ENCODE measurements at regions of chr5 and their contacts with region 1.

Region 1: GRCh38 chr5:87267574-87268125 is at the start of gene RASA1:
- DNase-seq: peak; percentile 88 to 97 (median 94)
- H3K4me3 ChIP-seq: peak within 1 kb of the TSS; percentile 64 to 99 (median 94)
- H3K27ac ChIP-seq: peak within 1 kb of the TSS; percentile 57 to 99 (median 93)
- H3K27me3 ChIP-seq: no peaks in the 10 kb centered on the region
- CTCF ChIP-seq: peak in 27 of 56 donors; percentile 5 to 48 (median 28)
- total RNA-seq, gene RASA1: 31.7 to 73.6 (median 55.8) TPM

Region 2: GRCh38 chr5:86623785-86624483 is 643.7 kb before region 1 on chr5:
- intact Hi-C with region 1: loop called in 1 of 2 experiments (anchors 10 kb)
- DNase-seq: no peak
- H3K4me3 ChIP-seq: no peak overlapping the region
- H3K27ac ChIP-seq: no peak overlapping the region
- H3K27me3 ChIP-seq: no peaks in the 10 kb centered on the region
- CTCF ChIP-seq: no peak

Region 3: DNA sequence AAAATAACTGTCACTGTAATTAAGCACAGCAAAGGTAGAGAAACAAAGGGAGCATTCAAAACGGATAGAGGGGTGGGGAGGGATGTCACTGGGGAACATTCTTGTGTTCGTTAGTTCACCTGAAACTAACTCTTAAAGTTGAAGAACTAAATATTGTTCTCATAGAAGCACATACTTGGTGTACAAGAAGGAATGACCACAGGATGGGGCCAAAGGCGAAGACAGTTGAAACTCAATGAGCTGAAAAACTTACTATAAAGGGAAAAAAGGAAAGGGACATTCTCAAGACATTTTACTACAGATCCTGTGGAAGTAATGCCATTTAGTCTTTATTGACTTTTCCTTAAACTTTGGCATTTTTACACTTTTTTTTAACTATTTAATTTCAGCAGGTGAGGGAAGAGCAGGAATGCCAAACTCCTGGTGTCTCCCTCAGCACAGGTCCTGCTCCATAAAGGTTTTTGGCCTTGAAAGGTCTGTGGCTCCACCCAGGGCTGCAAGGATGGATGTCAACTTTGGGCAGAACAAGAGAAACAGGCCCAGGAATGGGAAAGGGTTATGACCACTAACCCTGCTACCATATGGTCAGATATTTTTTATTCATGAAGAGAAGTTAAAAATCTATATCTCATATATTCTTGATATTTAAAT is 197.6 kb before region 1 on chr5:
- intact Hi-C with region 1: loop called in 1 of 2 experiments (anchors 10 kb)
- DNase-seq: peak in 2 of 10 donors; percentile 32 to 40
- H3K4me3 ChIP-seq: no peak overlapping the region
- H3K27ac ChIP-seq: no peak overlapping the region
- H3K27me3 ChIP-seq: no peaks in the 10 kb centered on the region
- CTCF ChIP-seq: peak in 41 of 56 donors; percentile 3 to 60 (median 31)

Region 4: GRCh38 chr5:87393331-87393730 is 125.7 kb after region 1 on chr5:
- intact Hi-C with region 1: loop called (anchors 5 to 10 kb)
- DNase-seq: no peak
- H3K4me3 ChIP-seq: no peak overlapping the region
- H3K27ac ChIP-seq: peak overlapping the region in 35 of 59 donors; percentile 1 to 69 (median 33)
- H3K27me3 ChIP-seq: no peaks in the 10 kb centered on the region
- CTCF ChIP-seq: no peak

Measured in dorsolateral prefrontal cortex (tissue), 120 donors.